HepG2 (cell line): ENCODE measurements at regions of chr1 and their contacts with region 1.

Region 1: GRCh38 chr1:173128742-173129141 is 78.0 kb upstream of the TNFSF18 start:
- DNase-seq: no peak
- ATAC-seq: no peak; the same call in 2 of the 3 replicates
- H3K4me3 ChIP-seq: no peak overlapping the region; a peak in 1 of 6 replicates
- H3K27ac ChIP-seq: peak overlapping the region; percentile 79
- H3K4me1 ChIP-seq: peaks cover 59% of the 10 kb centered on the region
- H3K27me3 ChIP-seq: no peaks in the 10 kb centered on the region
- CTCF ChIP-seq: no peak
- EP300 ChIP-seq: no peak
- POLR2A ChIP-seq: no peak
- RAD21 ChIP-seq: no peak

Region 2: GRCh38 chr1:172662464-172663109 is 466.2 kb before region 1 on chr1:
- CTCF ChIA-PET with region 1: no interaction called
- POLR2A ChIA-PET with region 1: no interaction called
- in situ Hi-C with region 1: no loop called
- intact Hi-C with region 1: no loop called
- DNase-seq: no peak
- ATAC-seq: no peak
- H3K4me3 ChIP-seq: no peak overlapping the region
- H3K27ac ChIP-seq: no peak overlapping the region
- H3K4me1 ChIP-seq: no peaks in the 10 kb centered on the region
- H3K27me3 ChIP-seq: peaks cover 0 to 6% of the 10 kb centered on the region in 2 experiments; a peak in 2 of 5 replicates
- CTCF ChIP-seq: no peak
- EP300 ChIP-seq: no peak
- POLR2A ChIP-seq: no peak
- RAD21 ChIP-seq: no peak

Region 3: DNA sequence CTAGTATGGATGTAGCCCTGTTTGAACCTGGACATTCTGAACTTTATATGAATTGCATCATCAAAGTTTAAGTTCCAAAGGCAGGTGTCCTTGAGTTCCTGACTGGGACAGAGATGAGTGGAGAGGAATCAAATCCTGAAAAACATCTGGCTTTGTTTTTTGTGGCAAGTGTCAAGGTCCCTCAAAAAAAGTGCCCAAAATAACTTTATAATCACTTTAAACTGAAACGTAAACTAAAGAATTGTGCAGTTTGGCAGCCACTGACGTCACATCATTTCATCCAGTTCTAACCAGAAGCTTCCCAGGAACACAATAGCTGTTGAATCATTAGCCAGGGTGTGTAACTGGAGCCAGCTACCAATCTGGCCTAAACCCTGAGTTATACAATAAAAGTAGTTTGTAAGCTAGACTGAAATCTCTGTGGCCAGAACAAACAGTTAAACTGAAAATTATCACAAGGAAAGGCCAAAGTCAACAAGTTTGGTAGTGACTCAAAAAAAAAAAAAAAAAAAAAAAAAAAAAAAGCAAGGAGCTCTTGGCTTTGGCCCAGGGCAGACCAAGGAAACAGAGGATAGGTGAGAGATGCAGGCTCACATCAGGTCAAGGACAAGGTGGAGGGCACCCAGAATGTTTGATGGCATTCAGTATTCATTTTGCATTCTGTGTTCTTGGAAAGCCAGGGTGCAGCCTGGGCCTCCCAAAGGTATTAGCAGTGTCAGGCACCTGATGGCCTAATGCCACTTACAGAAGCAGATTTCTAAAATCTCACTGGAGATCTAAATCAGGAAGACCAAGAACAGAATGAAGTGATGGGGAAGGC is 152.3 kb before region 1 on chr1:
- CTCF ChIA-PET with region 1: no interaction called
- POLR2A ChIA-PET with region 1: interaction called, 4 read pairs
- in situ Hi-C with region 1: no loop called
- intact Hi-C with region 1: loop called (anchors 5 kb)
- DNase-seq: peak; percentile 87
- ATAC-seq: peak; percentile 99
- H3K4me3 ChIP-seq: no peak overlapping the region; a peak in 1 of 6 replicates
- H3K27ac ChIP-seq: peak overlapping the region; percentile 58
- H3K4me1 ChIP-seq: peaks cover 37% of the 10 kb centered on the region
- H3K27me3 ChIP-seq: no peaks in the 10 kb centered on the region
- CTCF ChIP-seq: no peak
- EP300 ChIP-seq: peak in 1 of 2 experiments; percentile 40; a peak in 1 of 4 replicates
- POLR2A ChIP-seq: no peak
- RAD21 ChIP-seq: no peak

Region 4: DNA sequence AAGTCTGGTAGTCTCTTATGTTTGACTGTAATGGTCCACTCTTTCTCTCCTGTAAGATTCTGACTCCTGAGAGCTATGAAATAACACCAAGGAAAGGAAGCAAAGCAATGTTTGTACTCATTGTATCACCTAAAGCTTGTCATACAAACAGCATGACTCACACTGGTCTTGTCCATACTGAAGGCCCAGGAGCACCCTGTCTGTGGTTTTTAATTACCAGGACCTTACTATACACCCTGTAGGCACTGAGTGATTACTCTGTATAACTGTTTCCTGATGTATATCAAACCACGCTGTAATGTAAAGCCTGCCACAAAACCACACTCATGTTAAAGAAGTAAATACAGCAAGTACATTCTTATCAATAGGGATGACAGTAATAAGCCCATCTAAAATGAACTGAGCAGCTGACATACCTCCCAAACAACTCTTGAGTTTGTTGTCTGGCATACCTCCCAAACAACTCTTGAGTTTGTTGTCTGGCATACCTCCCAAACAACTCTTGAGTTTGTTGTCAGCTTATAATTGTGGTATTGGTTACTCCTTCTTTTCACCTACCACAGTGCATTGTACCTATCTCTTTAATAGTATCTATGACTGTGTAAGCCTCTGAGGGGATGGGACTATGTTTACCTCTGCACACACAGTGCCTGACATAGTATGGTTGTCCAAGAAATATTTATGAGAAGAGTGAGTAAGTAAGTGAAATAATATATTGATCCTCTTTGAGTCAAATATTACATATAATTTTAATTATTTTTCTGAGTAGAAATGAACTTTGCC is 66.4 kb before region 1 on chr1:
- CTCF ChIA-PET with region 1: no interaction called
- POLR2A ChIA-PET with region 1: no interaction called
- in situ Hi-C with region 1: no loop called
- intact Hi-C with region 1: no loop called
- DNase-seq: peak; percentile 2
- ATAC-seq: no peak; the same call in 2 of the 3 replicates
- H3K4me3 ChIP-seq: no peak overlapping the region
- H3K27ac ChIP-seq: no peak overlapping the region
- H3K4me1 ChIP-seq: no peaks in the 10 kb centered on the region
- H3K27me3 ChIP-seq: no peaks in the 10 kb centered on the region
- CTCF ChIP-seq: no peak
- EP300 ChIP-seq: no peak
- POLR2A ChIP-seq: no peak
- RAD21 ChIP-seq: no peak

Region 5: GRCh38 chr1:173241528-173242347 is 113.0 kb after region 1 on chr1:
- CTCF ChIA-PET with region 1: no interaction called
- POLR2A ChIA-PET with region 1: no interaction called
- in situ Hi-C with region 1: no loop called
- intact Hi-C with region 1: no loop called
- DNase-seq: no peak
- ATAC-seq: no peak
- H3K4me3 ChIP-seq: no peak overlapping the region
- H3K27ac ChIP-seq: no peak overlapping the region
- H3K4me1 ChIP-seq: no peaks in the 10 kb centered on the region
- H3K27me3 ChIP-seq: no peaks in the 10 kb centered on the region
- CTCF ChIP-seq: no peak
- EP300 ChIP-seq: no peak
- POLR2A ChIP-seq: no peak
- RAD21 ChIP-seq: no peak

Region 6: DNA sequence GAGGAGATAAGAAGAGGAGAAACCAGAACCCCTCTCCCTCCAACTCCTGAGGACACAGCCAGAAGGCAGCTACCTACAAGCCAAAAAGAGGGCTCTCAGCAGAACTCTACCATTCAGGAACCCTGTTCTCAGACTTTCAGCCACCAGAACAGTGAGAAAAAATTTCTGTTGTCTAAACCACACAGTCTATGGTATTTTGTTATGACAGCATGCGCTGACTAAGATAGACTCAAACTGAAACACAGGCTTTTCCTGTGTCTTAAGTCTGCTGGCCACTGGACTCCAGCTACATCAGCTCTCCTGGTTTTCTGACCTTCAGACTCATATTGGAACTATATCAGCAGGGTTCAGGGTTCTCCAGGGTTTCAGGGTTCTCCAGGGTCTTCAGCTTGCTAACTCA is 204.8 kb after region 1 on chr1:
- CTCF ChIA-PET with region 1: no interaction called
- POLR2A ChIA-PET with region 1: no interaction called
- in situ Hi-C with region 1: no loop called
- intact Hi-C with region 1: no loop called
- DNase-seq: no peak
- ATAC-seq: no peak
- H3K4me3 ChIP-seq: no peak overlapping the region
- H3K27ac ChIP-seq: no peak overlapping the region
- H3K4me1 ChIP-seq: peaks cover 8% of the 10 kb centered on the region; the same call in 1 of the 2 replicates
- H3K27me3 ChIP-seq: no peaks in the 10 kb centered on the region
- CTCF ChIP-seq: no peak
- EP300 ChIP-seq: no peak
- POLR2A ChIP-seq: no peak
- RAD21 ChIP-seq: no peak